ENCODE measurements at regions of chr12 and their contacts with region 1.

Region 1: DNA sequence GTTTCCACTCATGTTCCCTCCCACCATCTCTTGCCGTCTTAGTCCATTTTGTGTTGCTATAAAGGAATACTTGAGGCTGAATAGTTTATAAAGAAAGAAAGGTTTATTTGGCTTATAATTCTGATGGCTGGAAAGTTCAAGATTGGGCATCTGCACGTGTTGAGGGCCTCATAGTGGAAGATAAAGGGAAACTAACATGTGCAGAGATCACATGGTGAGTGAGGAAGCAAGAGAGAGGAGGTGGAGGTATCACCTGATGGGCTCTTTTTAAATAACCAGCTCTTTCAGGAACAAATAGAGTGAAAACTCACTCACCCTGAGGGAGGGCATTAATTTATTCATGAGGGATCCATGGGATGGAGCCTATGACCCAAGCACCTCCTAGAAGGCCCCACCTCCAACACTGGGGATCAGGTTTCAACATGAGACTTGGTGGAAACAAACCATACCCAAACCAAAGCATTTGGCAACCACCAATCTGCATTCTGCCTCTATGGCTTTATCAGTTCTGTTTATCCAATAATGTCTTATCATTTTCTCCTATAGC is 29.5 kb downstream of the MYO1H start:
- DNase-seq: no peak
- CTCF ChIP-seq: no peak

Region 2: DNA sequence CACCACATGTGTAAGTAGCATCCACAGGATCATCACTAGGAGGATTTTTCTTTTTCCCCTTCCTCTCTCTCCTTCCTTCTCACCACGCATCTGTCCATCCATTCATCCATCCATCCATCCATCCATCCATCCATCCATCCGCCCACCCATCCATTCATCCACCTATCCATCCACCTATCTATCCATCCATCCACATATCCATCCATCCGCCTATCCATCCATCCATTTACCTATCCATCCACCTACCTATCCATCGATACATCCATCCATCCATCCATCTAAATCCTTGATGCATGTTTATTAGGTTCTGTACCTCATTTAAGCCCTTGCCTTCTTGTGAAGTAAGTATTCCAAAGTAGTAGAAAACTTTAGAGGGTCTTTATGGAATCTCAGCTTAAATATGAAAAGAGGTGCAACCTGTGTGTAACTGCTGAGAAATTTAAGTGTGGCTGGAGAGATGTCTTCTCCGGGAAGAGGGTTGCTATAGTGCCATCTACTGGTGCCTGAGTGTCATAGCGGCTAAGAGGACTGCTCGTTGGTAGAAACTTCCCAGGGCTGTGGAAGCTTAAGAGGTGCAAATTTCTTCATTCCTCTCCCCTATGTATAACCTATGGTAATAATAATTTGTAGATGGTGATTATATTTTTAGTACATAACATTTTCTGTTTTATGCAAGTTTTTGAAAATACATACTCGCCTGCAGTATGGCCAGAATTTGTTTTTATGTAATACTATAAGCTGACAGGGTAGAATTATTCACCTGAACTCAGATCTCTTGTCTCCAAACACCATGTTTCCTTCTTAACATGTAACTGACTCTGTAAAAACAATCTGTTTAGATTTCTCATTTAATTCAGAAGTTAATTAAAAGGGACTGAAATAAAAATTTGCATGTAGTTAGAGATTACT is 16.5 kb after region 1 on chr12:
- CTCF ChIA-PET with region 1: interaction called, 15 read pairs
- POLR2A ChIA-PET with region 1: no interaction called
- DNase-seq: peak; percentile 79
- CTCF ChIP-seq: peak; percentile 91